ENCODE measurements at regions of chr2 and their contacts with region 1.

Region 1: DNA sequence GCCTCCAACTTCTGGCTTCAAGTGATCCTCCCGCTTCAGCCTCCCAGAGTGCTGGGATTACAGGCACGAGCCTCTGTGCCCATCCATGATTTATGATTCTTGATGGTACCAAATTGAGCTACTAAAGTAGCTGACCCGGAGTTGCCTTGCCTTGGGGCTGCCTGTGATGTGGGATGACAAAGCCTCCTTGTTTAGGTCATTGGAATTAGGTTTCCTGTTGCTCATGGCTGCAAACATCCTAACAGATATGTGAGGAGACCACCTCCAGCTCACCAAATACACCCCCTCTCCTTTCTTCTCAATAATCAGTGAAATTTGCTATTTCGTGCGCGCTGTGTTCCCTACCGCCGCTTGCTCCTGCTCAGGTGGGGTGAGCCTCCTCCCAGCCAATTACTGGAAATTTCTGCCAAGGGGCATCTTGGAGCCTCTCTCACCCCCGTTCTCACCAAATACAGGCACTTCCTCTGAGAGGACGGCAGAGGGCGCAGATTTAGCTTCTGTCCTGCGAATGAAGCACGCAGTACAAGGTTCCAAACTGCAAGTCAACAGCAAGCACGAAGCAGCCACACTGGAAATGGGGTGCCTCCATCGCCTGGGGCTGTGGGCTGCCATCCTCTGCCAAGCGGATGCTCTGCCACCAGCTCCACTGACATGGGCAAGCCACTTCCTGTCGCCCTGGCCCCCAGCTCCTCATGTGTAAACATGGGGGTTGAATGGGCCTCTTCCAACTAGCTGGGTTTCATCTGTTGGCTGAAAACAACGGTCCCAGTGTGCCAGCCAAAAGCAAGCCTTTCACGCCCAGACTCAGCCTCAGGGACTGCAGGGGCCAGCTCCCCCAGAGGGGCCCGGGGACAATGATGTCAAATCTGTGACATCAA is 71.7 kb downstream of the NCAPH start:
- DNase-seq: peak; percentile 81
- H3K4me3 ChIP-seq: no peak overlapping the region
- H3K27ac ChIP-seq: no peak overlapping the region
- H3K4me1 ChIP-seq: no peaks in the 10 kb centered on the region
- H3K27me3 ChIP-seq: no peaks in the 10 kb centered on the region
- CTCF ChIP-seq: peak; percentile 88

Region 2: DNA sequence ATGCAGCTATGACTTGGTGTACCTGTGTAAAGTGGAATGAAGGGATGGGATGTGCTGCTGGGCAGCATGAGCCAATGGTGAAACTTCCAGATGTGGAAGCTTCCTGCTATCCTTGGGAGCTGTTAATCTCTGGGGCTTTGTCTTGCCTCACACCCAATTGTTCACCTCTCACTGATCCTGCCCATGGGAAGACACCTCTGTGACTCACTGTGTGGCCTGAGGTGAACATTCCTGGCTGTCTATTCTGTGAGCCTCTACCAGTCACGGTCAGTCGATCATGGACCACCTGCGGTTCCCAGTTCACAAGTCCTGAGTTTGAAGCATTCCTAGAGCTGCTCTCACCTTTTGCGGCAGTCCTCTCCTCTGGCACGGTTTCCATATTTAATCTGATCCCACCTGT is 85.8 kb after region 1 on chr2:
- CTCF ChIA-PET with region 1: no interaction called
- POLR2A ChIA-PET with region 1: no interaction called
- intact Hi-C with region 1: no loop called
- DNase-seq: no peak
- H3K4me3 ChIP-seq: no peak overlapping the region
- H3K27ac ChIP-seq: no peak overlapping the region
- H3K4me1 ChIP-seq: peaks cover 3% of the 10 kb centered on the region
- H3K27me3 ChIP-seq: no peaks in the 10 kb centered on the region
- CTCF ChIP-seq: no peak

Region 3: DNA sequence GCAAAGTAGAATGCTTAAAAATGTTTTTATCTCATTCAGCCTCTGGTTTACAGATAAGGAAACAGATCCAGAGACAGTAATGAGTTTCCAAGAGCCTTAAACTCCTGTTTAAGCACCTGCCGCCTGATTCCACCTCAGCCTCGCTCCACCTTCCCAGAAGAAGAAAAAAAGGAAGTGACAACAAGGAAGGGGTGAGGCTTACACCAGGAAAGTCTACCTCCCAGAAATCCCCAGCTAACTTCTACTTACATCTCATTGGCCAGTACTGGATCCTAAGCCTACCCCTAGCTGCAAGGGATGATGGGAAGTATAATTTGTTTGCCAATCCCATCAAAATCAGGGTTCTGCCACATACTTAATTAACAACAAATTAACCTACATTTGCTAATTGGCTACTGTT is 113.9 kb after region 1 on chr2:
- CTCF ChIA-PET with region 1: interaction called, 10 read pairs
- POLR2A ChIA-PET with region 1: no interaction called
- intact Hi-C with region 1: no loop called
- DNase-seq: no peak
- H3K4me3 ChIP-seq: no peak overlapping the region
- H3K27ac ChIP-seq: no peak overlapping the region
- H3K4me1 ChIP-seq: no peaks in the 10 kb centered on the region
- H3K27me3 ChIP-seq: no peaks in the 10 kb centered on the region
- CTCF ChIP-seq: no peak

Region 4: DNA sequence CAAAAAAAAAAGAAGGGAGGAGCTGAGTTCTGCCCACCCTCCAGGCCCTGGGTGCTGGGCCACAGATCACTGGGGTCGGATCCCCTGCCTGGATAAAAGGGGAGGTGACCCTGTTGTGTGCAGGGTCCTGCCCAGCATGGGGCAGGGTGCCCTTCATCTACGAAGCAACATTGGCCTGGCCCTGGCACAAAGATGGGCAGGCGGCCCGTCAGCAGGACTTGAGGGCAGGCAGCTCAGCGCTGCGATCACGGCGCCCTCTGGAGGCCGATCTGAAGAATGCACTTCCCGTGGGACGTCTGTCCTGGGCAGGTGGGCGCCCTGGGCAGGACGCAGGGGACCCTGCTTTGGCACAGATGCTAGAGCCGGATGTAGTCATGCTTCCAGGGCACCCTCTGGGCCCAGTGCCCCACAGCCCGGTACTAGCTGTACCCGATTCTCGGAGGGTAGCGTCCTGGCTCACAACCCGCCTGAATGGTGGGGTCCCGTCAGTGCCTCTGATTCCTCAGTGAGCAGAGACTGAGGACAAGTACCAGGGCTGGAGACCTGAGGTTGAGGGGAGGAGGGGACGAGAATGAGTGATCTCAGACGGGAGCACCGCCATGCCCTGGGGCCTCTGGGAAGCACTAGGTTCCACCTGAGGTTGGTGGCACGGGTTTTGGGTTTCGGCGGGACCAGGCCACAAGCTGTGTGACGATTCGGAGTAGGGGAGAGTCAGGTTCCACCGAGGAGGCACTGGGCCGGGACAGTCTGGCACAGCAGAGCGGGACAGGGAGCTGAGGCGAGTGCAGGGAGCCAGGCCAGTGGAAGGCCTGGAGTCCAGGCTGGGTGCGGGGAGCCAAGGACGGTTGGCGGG is 147.2 kb after region 1 on chr2:
- CTCF ChIA-PET with region 1: interaction called, 6 read pairs
- POLR2A ChIA-PET with region 1: no interaction called
- intact Hi-C with region 1: loop called (anchors 1 kb)
- DNase-seq: peak; percentile 64
- H3K4me3 ChIP-seq: no peak overlapping the region
- H3K27ac ChIP-seq: no peak overlapping the region
- H3K4me1 ChIP-seq: no peaks in the 10 kb centered on the region
- H3K27me3 ChIP-seq: no peaks in the 10 kb centered on the region
- CTCF ChIP-seq: peak; percentile 98

Measured in A673 (cell line).